Dorsolateral prefrontal cortex (tissue), 120 donors: ENCODE measurements at regions of chr1 and their contacts with region 1.

Region 1: GRCh38 chr1:226634166-226634588 is 85.6 kb downstream of the STUM start:
- DNase-seq: peak; percentile 77 to 93 (median 86)
- H3K4me3 ChIP-seq: no peak overlapping the region
- H3K27ac ChIP-seq: peak overlapping the region in 57 of 59 donors; percentile 1 to 87 (median 66)
- H3K27me3 ChIP-seq: no peaks in the 10 kb centered on the region
- CTCF ChIP-seq: peak; percentile 78 to 99 (median 96)

Region 2: DNA sequence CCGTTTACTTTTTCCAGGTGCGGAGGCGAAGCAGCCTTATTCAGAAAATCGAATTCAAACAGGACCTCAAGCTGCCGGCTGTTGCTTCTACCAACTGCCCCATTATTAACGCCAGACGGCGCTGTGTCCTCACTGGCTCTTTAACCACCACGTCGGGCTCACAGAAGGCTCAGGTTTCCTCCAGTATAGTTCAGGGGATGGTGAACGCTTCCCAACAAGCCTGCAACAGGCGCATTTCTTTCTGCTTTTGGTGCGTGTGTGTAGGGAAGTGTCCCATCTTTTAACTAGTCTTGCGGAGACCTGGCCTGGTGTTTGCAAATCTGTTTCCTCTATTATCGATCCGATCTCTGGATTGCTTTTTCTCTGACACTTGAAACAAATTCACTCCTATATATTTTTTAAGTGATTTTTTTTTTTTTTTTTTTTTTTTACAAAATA is 86.4 kb before region 1 on chr1:
- intact Hi-C with region 1: loop called in 1 of 2 experiments (anchors 5 kb)
- DNase-seq: peak; percentile 59 to 85 (median 78)
- H3K4me3 ChIP-seq: peak overlapping the region in 41 of 59 donors; percentile 14 to 73 (median 66)
- H3K27ac ChIP-seq: peak overlapping the region in 2 of 59 donors; percentile 11 to 63
- H3K27me3 ChIP-seq: peaks cover 0 to 6% (median 0%) of the 10 kb centered on the region in 45 donors
- CTCF ChIP-seq: peak; percentile 59 to 88 (median 76)

Region 3: DNA sequence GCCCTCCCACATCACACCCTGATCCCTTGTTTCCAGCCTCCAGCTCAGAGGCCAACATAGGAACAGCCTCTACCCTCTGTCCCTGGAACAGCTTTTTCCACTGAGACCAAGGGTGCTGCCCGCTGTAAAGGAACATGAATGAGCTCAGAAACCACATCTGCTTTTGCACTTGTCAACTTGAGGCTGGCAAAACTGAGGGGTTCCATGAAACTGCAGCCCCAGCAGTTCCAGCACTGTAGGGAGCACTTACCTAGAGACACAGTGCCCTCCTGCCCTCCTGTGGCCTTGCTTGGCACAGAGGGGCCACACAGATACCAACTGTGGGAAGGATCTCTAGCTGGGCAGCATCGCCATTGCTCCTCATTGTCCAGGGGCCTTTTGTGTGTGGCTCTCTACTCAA is 53.2 kb after region 1 on chr1:
- intact Hi-C with region 1: loop called (anchors 5 to 10 kb)
- DNase-seq: peak in 1 of 10 donors; percentile 55
- H3K4me3 ChIP-seq: no peak overlapping the region
- H3K27ac ChIP-seq: peak overlapping the region in 51 of 59 donors; percentile 38 to 98 (median 92)
- H3K27me3 ChIP-seq: no peaks in the 10 kb centered on the region
- CTCF ChIP-seq: peak in 37 of 56 donors; percentile 13 to 60 (median 34)

Region 4: DNA sequence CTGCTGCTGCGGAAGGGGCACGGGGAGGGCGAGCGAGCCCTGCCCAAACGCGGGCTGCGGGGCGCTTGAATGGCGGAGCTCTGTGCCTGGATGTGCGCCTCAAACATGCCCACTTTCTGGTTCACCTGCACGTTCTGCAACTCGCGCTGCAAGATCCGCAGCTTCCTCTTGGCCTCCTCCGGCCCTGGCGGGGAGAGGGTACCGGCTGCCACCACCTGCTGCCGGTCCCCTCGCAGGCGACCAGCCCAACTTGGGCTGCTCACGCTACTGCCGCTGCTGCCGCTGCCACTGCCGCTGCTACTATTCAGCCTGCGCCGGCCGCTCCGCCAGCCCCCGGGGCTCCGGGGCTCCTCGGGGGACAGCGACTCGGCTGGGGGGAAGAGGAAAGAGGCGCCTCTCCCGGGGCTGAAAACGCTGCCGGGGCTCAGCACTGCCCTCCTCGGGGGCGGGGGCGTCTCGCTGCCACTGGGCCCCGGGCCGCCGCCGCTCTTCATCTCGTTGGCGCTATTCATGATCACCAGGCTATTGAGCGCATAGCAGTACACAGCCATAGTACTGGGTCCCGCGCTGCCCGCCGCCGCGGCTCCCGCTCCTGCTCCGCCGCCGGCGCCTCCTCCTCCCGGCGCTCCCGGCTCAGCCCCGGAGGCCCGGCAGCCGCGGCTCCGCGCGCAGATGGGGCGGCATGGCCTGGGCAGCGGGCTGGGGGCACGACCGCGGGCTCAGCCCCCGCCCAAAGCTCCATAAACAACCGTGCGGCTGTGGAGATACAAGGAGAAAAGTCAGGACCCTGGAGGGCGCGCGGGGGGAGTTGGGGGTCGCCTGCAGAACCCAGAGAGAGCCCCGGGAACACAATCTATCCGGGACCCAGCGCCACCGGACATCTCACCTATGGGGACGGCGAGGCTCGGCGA is 103.0 kb after region 1 on chr1:
- intact Hi-C with region 1: loop called (anchors 2 kb)
- DNase-seq: peak; percentile 59 to 82 (median 73)
- H3K4me3 ChIP-seq: peak overlapping the region; percentile 62 to 97 (median 89)
- H3K27ac ChIP-seq: peak overlapping the region; percentile 92 to 100 (median 98)
- H3K27me3 ChIP-seq: no peaks in the 10 kb centered on the region
- CTCF ChIP-seq: peak in 36 of 56 donors; percentile 1 to 52 (median 32)

Region 5: DNA sequence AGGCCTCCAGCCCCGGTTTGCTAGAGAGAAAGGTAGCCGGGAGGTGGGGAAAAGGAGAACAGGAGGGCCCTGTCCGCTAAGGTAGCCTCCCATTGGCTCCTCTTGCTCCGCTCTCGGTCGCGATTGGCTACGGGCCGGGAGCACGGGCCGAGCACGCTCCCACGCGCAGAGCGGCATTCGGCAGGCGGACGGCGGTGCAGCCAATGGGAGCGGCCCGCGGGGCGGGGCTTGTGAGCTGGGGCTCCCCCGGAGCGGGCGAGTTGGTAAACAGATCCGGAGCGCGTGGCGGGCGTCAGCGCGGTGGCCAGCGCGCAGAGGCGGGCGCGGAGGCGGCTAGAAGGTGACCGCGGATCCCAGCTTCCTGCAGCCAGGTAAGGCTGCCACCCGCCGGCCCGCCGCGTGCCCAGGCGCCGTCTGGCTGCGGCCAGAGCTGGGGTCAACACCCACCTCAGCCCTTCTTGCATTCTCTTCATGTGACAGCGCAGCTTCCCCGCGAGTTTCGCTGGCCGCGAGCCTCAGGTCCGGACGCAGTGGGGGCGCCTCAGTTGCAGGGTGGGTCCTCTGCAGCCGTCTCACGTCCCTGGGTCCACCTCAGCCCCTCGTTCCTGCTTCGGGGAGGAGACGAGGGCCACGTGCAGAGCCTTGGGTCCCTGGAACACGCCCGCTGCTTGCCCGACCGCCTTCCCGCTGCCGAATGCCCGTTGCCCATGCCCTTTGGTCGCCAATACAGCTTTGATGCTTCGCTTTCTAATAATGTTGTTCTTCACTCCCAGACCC is 306.0 kb after region 1 on chr1 and contains the start of gene COQ8A:
- intact Hi-C with region 1: loop called in 1 of 2 experiments (anchors 10 kb)
- DNase-seq: peak; percentile 98 to 100 (median 99)
- H3K4me3 ChIP-seq: peak within 1 kb of the TSS; percentile 63 to 100 (median 91)
- H3K27ac ChIP-seq: peak within 1 kb of the TSS; percentile 88 to 100 (median 99)
- H3K27me3 ChIP-seq: no peaks in the 10 kb centered on the region
- CTCF ChIP-seq: peak in 16 of 56 donors; percentile 4 to 41 (median 21)
- total RNA-seq, gene COQ8A: 27.2 to 59.8 (median 44.7) TPM